ENCODE measurements at regions of chr15 and their contacts with region 1.

Region 1: GRCh38 chr15:92917606-92918407 is 17.7 kb downstream of the CHD2 start:
- DNase-seq: peak; percentile 98
- H3K4me3 Mint-ChIP-seq: peak overlapping the region; percentile 58
- H3K27ac Mint-ChIP-seq: peak overlapping the region; percentile 75
- H3K4me1 Mint-ChIP-seq: peaks cover 78% of the 10 kb centered on the region
- H3K27me3 Mint-ChIP-seq: no peaks in the 10 kb centered on the region

Region 2: GRCh38 chr15:92797168-92797951 is 120.4 kb before region 1 on chr15:
- intact Hi-C with region 1: loop called (anchors 1 kb)
- DNase-seq: peak; percentile 87
- H3K4me3 Mint-ChIP-seq: no peak overlapping the region
- H3K27ac Mint-ChIP-seq: peak overlapping the region; percentile 46
- H3K4me1 Mint-ChIP-seq: peaks cover 16% of the 10 kb centered on the region
- H3K27me3 Mint-ChIP-seq: no peaks in the 10 kb centered on the region

Region 3: DNA sequence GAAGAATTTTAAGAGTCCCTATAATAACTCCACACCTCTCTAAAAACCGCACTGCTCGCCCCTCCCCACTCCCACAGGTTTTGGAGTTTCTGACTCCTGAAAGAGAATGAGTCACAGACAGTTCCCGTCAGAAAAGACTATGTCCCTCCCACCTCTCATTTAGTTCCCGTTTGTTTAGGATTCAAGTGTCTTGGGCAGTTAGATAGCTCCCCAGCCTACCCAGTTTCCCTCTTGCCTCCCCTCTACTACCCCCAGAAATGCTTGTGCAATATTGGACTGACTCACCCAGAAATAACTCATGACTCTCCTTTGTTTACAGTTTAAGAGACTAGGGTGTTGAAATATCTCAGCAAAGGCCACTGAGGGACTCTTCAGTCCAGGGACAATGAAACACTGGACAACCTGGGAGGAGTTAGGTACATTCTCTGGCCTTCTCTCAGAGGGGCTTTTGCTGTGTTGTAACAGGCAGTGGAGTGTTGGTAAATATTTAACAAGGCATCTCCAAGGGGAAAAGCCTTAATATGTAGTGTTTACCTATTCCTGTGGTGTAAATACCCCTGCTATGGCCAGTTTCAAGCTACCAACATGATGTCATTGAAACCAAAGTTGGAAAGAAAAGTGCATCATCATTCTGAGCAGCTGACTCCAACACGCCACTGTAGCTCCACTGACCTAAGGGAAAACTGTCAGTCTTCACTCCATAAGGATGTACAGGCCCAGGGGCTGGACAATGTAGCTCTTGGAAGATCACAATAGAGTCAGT is 113.8 kb before region 1 on chr15:
- intact Hi-C with region 1: loop called (anchors 1 kb)
- DNase-seq: peak; percentile 88
- H3K4me3 Mint-ChIP-seq: peak overlapping the region; percentile 15
- H3K27ac Mint-ChIP-seq: peak overlapping the region; percentile 87
- H3K4me1 Mint-ChIP-seq: peaks cover 35% of the 10 kb centered on the region
- H3K27me3 Mint-ChIP-seq: no peaks in the 10 kb centered on the region

Region 4: GRCh38 chr15:92808978-92809879 is 108.6 kb before region 1 on chr15:
- intact Hi-C with region 1: loop called (anchors 1 kb)
- DNase-seq: peak; percentile 100
- H3K4me3 Mint-ChIP-seq: peak overlapping the region; percentile 89
- H3K27ac Mint-ChIP-seq: peak overlapping the region; percentile 98
- H3K4me1 Mint-ChIP-seq: peaks cover 45% of the 10 kb centered on the region
- H3K27me3 Mint-ChIP-seq: no peaks in the 10 kb centered on the region

Region 5: DNA sequence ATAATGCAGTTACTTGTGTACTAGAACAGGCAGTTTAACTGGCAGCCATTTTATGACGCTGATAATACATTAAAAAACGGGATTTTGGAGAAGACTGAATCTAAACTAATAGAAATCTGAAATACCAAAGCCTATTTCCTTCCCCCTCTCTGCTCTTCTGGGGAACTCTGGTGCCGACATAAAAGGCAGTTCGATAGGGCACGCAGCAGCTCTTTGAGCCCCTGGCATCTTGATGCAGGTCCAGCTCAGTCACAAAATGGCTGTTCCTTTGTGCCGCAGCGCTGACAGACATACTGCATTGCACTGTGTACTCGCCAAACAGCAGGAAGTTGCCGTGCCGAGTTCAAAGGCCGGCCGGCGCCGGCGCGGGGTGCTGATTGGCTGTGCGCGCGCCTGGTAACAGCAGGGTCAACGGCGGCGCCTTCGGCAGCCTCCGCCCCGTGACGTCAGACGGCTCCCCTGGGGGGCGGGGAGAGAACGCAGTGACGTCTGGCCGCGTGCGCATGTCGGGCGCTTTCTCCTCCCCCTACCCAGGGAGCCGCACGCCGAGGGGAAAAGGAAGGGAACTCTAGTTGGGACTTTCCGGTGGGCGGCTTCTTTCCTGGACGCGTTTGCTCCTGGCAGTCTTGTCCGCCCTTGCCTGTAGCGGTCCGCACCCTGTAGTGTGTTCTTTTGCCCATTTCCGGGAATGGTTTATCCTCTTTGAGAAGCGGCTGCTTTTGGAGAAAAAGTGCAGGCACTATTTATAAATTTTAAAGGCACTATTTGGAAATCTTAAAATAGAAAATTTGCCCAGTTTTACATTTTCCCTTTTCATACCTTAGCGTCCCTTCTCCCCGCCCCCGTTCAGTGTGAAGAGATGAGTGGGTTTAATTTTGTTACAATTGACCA is 13.6 kb before region 1 on chr15:
- intact Hi-C with region 1: loop called (anchors 1 kb)
- DNase-seq: peak; percentile 100
- H3K4me3 Mint-ChIP-seq: peak overlapping the region; percentile 89
- H3K27ac Mint-ChIP-seq: peak overlapping the region; percentile 100
- H3K4me1 Mint-ChIP-seq: peaks cover 56% of the 10 kb centered on the region
- H3K27me3 Mint-ChIP-seq: no peaks in the 10 kb centered on the region

Region 6: GRCh38 chr15:92938387-92938786 is 20.6 kb after region 1 on chr15:
- intact Hi-C with region 1: no loop called
- DNase-seq: no peak
- H3K4me3 Mint-ChIP-seq: no peak overlapping the region
- H3K27ac Mint-ChIP-seq: no peak overlapping the region
- H3K4me1 Mint-ChIP-seq: peaks cover 44% of the 10 kb centered on the region
- H3K27me3 Mint-ChIP-seq: no peaks in the 10 kb centered on the region

Region 7: GRCh38 chr15:92954578-92954977 is 36.8 kb after region 1 on chr15:
- intact Hi-C with region 1: no loop called
- DNase-seq: no peak
- H3K4me3 Mint-ChIP-seq: no peak overlapping the region
- H3K27ac Mint-ChIP-seq: no peak overlapping the region
- H3K4me1 Mint-ChIP-seq: peaks cover 18% of the 10 kb centered on the region
- H3K27me3 Mint-ChIP-seq: no peaks in the 10 kb centered on the region

Region 8: DNA sequence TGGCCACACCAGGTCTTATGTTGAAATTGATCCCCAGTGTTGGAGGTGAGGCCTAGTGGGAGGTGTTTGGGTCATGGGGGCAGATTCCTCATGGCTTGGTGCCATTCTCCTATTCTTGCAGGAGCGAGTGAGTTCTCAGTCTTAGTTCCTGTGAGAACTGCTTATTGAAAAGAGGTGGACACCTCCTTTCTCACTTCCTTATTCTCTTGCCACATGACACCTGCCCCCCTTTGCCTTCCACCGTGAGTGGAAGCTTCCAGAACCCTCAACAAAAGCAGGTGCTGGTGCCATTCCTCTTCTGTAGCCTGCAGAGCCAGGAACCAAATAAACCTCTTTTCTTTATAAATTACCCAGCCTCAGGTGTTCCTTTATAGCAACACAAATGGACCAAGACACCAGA is 995.5 kb after region 1 on chr15:
- intact Hi-C with region 1: no loop called
- DNase-seq: no peak
- H3K4me3 Mint-ChIP-seq: no peak overlapping the region
- H3K27ac Mint-ChIP-seq: no peak overlapping the region
- H3K4me1 Mint-ChIP-seq: no peaks in the 10 kb centered on the region
- H3K27me3 Mint-ChIP-seq: peaks cover 2% of the 10 kb centered on the region

Measured in activated CD4-positive, alpha-beta T cell treated with anti-CD3 and anti-CD28 coated beads, Interleukin-2, amount 10 ng/mL, durations not matched to agents 24 days and 14 days (primary cell).